Calu3 (cell line): ENCODE measurements at regions of chr12 and their contacts with region 1.

Region 1: GRCh38 chr12:98998697-98999299 is 353.7 kb downstream of the APAF1 start:
- DNase-seq: no peak
- H3K4me3 Mint-ChIP-seq: no peak overlapping the region
- H3K27ac Mint-ChIP-seq: no peak overlapping the region
- H3K4me1 Mint-ChIP-seq: no peaks in the 10 kb centered on the region
- H3K27me3 Mint-ChIP-seq: peaks cover 18% of the 10 kb centered on the region
- CTCF ChIP-seq: peak; percentile 40

Region 2: GRCh38 chr12:98418357-98419075 is 580.3 kb before region 1 on chr12:
- CTCF ChIA-PET with region 1: no interaction called
- intact Hi-C with region 1: loop called (anchors 5 kb)
- DNase-seq: peak; percentile 95
- H3K4me3 Mint-ChIP-seq: peak overlapping the region; percentile 55
- H3K27ac Mint-ChIP-seq: peak overlapping the region; percentile 88
- H3K4me1 Mint-ChIP-seq: peaks cover 35% of the 10 kb centered on the region
- H3K27me3 Mint-ChIP-seq: no peaks in the 10 kb centered on the region
- CTCF ChIP-seq: no peak

Region 3: DNA sequence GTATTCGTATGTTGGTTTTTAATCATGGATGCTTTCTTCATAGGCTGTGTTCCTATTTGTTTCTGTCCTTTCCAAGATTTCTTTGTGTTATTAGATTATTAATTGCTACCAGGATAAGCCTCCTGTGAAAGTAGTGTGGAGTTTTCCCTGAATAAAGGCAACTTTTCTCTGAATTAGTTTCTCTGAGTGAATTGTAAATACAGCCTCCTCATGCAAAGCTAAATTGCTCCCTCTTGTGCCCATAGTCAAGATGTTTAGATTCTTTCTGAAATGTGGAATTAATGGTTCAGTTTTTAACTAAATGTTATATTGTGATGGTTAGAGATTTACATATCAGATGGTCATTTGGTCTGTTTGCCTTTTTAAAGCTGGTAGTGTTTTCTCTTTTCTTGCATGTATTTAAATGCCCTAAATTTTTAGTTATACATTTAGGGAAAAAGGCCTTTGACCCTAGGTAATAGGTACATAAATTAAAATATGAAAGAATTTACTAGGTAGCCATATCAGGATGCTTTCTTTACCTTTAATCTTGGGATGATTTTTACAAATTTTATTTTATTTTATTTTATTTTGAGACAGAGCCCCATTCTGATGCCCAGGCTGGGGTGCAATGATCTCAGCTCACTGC is 344.8 kb before region 1 on chr12:
- CTCF ChIA-PET with region 1: no interaction called
- intact Hi-C with region 1: loop called (anchors 1 kb)
- DNase-seq: peak; percentile 22
- H3K4me3 Mint-ChIP-seq: no peak overlapping the region
- H3K27ac Mint-ChIP-seq: no peak overlapping the region
- H3K4me1 Mint-ChIP-seq: peaks cover 14% of the 10 kb centered on the region
- H3K27me3 Mint-ChIP-seq: no peaks in the 10 kb centered on the region
- CTCF ChIP-seq: peak; percentile 28

Region 4: DNA sequence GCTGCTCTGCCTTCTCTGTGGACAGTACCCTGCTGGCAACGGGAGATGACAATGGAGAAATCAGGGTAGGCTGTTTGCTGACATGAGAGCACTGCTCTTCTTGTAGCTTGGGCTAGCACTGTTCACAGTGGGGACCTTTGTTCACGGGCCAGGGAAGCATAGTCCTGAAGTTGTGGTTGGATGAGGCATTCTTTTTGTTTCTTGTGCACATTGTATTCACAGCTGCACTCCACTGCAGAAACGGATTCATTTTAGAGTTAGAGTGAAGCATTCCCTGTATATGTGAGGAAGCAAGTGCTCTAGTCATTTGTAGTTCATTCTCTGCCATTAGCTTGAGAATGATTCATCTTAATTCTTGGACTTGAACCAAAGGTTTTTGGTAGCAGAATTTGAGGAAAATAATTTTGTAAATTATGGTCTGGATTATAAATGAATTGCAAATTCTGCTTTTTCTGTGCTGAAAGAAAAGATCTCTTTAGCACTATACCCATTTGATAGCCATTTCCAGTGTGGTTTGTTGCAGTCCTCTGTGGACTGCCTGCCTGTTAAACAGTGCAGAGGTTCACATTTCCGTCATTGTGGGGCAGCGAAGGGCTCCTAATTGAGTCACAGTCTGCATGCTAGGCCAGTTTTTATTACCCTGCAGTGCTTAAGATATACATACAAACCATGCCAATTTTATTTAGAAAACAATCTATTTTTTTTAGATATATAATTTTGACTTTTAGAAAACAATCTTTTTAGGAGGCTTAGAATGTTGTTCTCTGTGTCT is 273.1 kb before region 1 on chr12:
- CTCF ChIA-PET with region 1: no interaction called
- intact Hi-C with region 1: loop called (anchors 1 kb)
- DNase-seq: peak; percentile 63
- H3K4me3 Mint-ChIP-seq: no peak overlapping the region
- H3K27ac Mint-ChIP-seq: no peak overlapping the region
- H3K4me1 Mint-ChIP-seq: no peaks in the 10 kb centered on the region
- H3K27me3 Mint-ChIP-seq: no peaks in the 10 kb centered on the region
- CTCF ChIP-seq: no peak

Region 5: GRCh38 chr12:98955277-98955676 is 43.5 kb before region 1 on chr12:
- CTCF ChIA-PET with region 1: interaction called, 8 read pairs
- intact Hi-C with region 1: loop called (anchors 1 kb)
- DNase-seq: peak; percentile 54
- H3K4me3 Mint-ChIP-seq: no peak overlapping the region
- H3K27ac Mint-ChIP-seq: no peak overlapping the region
- H3K4me1 Mint-ChIP-seq: no peaks in the 10 kb centered on the region
- H3K27me3 Mint-ChIP-seq: peaks cover 19% of the 10 kb centered on the region
- CTCF ChIP-seq: peak; percentile 50